Naive thymus-derived CD4-positive, alpha-beta T cell (primary cell): ENCODE measurements at regions of chr7 and their contacts with region 1.

Region 1: DNA sequence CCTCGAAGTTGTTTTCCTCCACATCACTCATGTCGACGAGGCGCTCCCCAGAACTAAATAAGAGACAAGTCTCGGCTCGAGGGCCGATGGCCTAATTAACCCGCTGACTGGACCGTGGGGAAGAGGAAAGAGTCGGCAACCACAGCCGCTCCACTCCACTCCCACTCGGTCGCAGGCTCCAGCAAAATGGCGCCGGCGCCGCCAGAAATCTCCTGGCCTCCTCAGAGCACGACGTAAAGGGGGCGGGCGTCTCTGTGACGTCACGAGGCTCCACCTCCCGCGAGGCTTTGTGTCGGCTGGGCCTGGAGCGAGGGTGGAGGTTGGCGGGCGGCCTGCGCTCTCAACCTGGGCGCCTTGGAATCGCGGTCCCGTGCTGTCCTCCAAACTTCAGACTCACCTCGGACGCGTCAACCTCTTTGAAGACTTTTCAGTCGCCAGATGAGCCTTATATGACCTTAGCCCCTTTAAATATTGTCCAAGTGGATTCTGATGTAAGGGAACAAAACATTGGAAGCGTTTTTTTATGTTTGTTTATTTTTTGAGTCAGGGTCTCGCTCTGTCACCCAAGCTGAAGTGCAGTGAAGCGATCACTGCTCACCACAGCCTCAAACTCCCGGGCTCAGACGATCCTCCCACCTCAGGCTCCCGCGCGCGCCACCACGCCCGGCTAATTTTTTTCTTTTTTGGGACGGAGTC is at the start of gene TRA2A:
- DNase-seq: peak; percentile 93 to 97 (median 95)
- ATAC-seq: peak; percentile 96
- H3K4me3 ChIP-seq: peak within 1 kb of the TSS; percentile 80
- H3K4me3 Mint-ChIP-seq: peak within 1 kb of the TSS; percentile 89 to 100 (median 99)
- H3K27ac ChIP-seq: peak within 1 kb of the TSS; percentile 93
- H3K27ac Mint-ChIP-seq: peak within 1 kb of the TSS; percentile 98 to 100 (median 100)
- H3K4me1 ChIP-seq: peaks cover 30 to 31% of the 10 kb centered on the region in 2 donors
- H3K4me1 Mint-ChIP-seq: peaks cover 28 to 51% (median 46%) of the 10 kb centered on the region in 7 donors
- H3K27me3 ChIP-seq: no peaks in the 10 kb centered on the region
- H3K27me3 Mint-ChIP-seq: no peaks in the 10 kb centered on the region
- total RNA-seq, gene TRA2A: 131 to 263 (median 163) TPM

Region 2: DNA sequence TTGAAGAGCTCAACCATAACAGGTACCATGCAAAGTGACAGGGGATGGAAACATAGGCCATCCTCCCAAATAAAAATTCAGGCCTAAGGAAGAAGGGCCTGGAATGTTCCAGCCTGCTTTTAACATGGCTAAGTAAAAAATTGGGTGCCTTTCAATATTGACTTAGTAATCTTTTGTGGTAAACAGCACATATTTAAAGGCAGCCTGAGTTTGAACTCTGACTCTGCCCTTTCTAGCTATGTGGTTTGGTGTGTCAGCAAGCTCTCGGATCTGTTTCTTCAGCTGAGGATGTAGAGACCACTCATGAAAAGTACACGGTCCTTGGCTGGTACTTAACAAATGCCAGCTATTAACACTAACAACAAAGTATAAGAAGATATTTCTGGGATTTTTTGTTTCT is 1394.5 kb before region 1 on chr7:
- CTCF ChIA-PET with region 1: no interaction called
- POLR2A ChIA-PET with region 1: no interaction called
- intact Hi-C with region 1: no loop called
- DNase-seq: no peak
- ATAC-seq: no peak
- H3K4me3 ChIP-seq: no peak overlapping the region
- H3K4me3 Mint-ChIP-seq: no peak overlapping the region
- H3K27ac ChIP-seq: no peak overlapping the region
- H3K27ac Mint-ChIP-seq: no peak overlapping the region
- H3K4me1 ChIP-seq: no peaks in the 10 kb centered on the region
- H3K4me1 Mint-ChIP-seq: no peaks in the 10 kb centered on the region
- H3K27me3 ChIP-seq: no peaks in the 10 kb centered on the region
- H3K27me3 Mint-ChIP-seq: peaks cover 7 to 32% (median 12%) of the 10 kb centered on the region in 5 donors

Region 3: DNA sequence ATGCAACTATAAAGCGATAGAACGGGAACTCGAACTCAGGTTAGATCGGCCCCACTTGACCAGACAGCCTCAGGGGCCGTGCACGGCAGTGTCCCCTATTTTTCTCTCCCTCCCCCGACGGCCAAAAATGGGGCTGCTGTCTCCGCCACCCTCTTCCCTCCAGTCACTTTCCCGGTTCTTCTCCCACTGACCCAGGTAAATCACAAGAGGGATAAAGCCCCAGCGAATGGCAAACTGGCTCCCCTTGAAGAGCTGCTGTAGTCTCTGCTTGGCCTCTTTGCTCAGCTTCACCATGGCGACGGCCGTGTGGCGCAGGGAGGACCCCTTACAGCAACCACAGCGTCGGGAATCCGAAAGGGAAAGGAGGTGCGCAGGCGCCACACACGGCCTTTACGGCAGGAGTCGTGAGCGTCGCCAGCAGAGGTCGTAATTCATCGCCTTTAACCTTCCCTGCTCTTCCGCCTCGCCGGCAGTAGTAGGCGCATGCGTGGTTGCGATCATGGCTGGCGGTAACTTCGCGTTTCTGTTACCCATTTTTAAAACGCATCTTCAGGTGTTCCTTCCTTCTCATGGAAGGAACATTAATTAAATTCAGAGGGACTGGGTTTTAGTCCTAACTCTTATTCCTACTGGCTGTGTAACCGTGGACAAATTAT is 709.3 kb before region 1 on chr7 and contains the start of gene TOMM7:
- CTCF ChIA-PET with region 1: no interaction called
- POLR2A ChIA-PET with region 1: no interaction called
- intact Hi-C with region 1: loop called in 1 of 2 experiments (anchors 10 kb)
- DNase-seq: peak; percentile 68 to 92 (median 90)
- ATAC-seq: peak; percentile 99
- H3K4me3 ChIP-seq: peak within 1 kb of the TSS; percentile 83
- H3K4me3 Mint-ChIP-seq: peak within 1 kb of the TSS; percentile 93 to 100 (median 99)
- H3K27ac ChIP-seq: peak within 1 kb of the TSS; percentile 94
- H3K27ac Mint-ChIP-seq: peak within 1 kb of the TSS; percentile 94 to 100 (median 99)
- H3K4me1 ChIP-seq: peaks cover 6 to 19% of the 10 kb centered on the region in 2 donors
- H3K4me1 Mint-ChIP-seq: peaks cover 15 to 53% (median 43%) of the 10 kb centered on the region in 7 donors
- H3K27me3 ChIP-seq: peaks cover 0 to 4% of the 10 kb centered on the region in 2 donors
- H3K27me3 Mint-ChIP-seq: peaks cover 15 to 36% (median 19%) of the 10 kb centered on the region in 5 donors
- total RNA-seq, gene TOMM7: 302 to 737 (median 649) TPM

Region 4: GRCh38 chr7:23273141-23273599 is 258.8 kb before region 1 on chr7:
- CTCF ChIA-PET with region 1: no interaction called
- POLR2A ChIA-PET with region 1: interaction called, 5 read pairs
- intact Hi-C with region 1: loop called (anchors 5 kb)
- DNase-seq: peak; percentile 64 to 85 (median 80)
- ATAC-seq: peak; percentile 99
- H3K4me3 ChIP-seq: no peak overlapping the region
- H3K4me3 Mint-ChIP-seq: peak overlapping the region; percentile 14 to 82 (median 70)
- H3K27ac ChIP-seq: no peak overlapping the region
- H3K27ac Mint-ChIP-seq: peak overlapping the region in 4 of 9 donors; percentile 3 to 54 (median 23)
- H3K4me1 ChIP-seq: peaks cover 0 to 4% of the 10 kb centered on the region in 2 donors
- H3K4me1 Mint-ChIP-seq: peaks cover 2 to 16% (median 10%) of the 10 kb centered on the region in 7 donors
- H3K27me3 ChIP-seq: no peaks in the 10 kb centered on the region
- H3K27me3 Mint-ChIP-seq: peaks cover 0 to 9% (median 4%) of the 10 kb centered on the region in 5 donors

Region 5: DNA sequence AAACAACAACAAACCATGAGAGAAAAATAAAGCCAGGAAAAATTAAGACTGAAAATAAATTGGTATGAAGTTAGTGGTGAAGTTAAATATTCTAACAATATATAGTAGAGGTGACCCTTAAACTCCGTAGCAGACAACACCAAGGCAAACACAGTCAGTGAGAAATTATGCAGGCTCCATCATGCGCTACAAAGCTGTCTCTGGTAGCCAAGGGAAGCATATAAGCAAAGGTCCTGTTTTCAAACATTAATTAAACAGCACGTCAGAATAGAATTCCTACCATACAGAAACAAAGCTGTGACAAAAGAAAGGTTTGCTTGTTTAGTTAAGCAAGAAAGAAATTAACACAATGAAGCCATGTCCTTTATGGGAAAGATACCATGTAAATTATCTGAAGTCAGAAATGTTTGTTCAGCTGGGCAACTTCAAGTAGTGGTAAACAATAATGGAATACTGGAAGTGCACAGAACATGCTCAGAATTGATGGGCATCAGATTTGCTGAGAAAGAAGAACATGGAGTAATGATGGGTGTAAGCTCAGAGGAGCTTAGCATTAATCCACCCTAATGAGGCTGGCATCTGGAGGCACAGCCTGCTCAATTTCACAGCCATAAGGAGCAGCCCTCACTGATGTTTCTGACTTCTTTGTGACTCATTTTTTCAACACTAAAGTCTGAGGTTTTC is 137.3 kb before region 1 on chr7:
- CTCF ChIA-PET with region 1: no interaction called
- POLR2A ChIA-PET with region 1: no interaction called
- intact Hi-C with region 1: no loop called
- DNase-seq: no peak
- ATAC-seq: no peak
- H3K4me3 ChIP-seq: no peak overlapping the region
- H3K4me3 Mint-ChIP-seq: no peak overlapping the region
- H3K27ac ChIP-seq: no peak overlapping the region
- H3K27ac Mint-ChIP-seq: no peak overlapping the region
- H3K4me1 ChIP-seq: no peaks in the 10 kb centered on the region
- H3K4me1 Mint-ChIP-seq: no peaks in the 10 kb centered on the region
- H3K27me3 ChIP-seq: no peaks in the 10 kb centered on the region
- H3K27me3 Mint-ChIP-seq: peaks cover 0 to 4% (median 0%) of the 10 kb centered on the region in 5 donors

Region 6: DNA sequence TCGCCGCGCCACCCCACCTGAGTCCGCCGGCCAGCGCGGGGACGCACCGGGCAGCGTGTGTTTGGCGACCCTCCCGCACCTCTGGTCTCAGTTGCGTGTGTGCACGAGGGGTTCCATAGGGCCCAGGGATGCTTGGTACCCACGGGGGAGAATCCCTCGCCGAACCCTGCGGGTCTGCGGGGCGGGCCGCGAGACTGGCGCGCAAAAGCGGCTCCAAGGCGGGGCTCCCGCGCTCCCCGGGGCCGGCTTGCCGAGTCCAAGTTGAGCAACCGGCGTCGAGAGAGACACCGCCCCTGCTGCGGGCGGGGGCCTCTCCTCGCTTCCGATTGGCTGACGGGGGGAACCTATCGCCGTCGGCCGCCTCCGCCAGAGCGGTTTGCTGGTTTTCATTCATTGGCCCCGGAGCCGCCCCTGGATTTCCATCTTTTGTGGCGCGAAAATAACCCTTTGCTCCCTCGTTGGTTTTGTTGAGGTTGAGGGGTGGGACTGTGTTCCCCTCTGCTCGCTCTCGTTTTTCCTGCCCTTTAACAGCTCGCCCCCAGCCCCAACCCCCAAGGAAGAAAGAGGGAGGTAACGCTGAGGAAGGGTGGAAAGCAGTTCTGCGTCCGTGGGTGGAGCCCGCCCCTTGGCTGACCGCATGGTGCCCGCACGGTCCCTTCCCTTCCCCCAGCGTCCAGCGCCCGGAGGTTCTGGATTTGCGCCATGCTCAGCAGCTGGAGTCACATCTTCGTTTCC is 57.7 kb before region 1 on chr7:
- CTCF ChIA-PET with region 1: no interaction called
- POLR2A ChIA-PET with region 1: interaction called, 3 read pairs
- intact Hi-C with region 1: loop called (anchors 2 kb)
- DNase-seq: peak in 6 of 9 donors; percentile 13 to 90 (median 26)
- ATAC-seq: peak; percentile 80
- H3K4me3 ChIP-seq: no peak overlapping the region
- H3K4me3 Mint-ChIP-seq: peak overlapping the region; percentile 13 to 85 (median 54)
- H3K27ac ChIP-seq: no peak overlapping the region
- H3K27ac Mint-ChIP-seq: peak overlapping the region in 5 of 9 donors; percentile 21 to 70 (median 69)
- H3K4me1 ChIP-seq: peaks cover 12 to 22% of the 10 kb centered on the region in 2 donors
- H3K4me1 Mint-ChIP-seq: peaks cover 17 to 35% (median 29%) of the 10 kb centered on the region in 7 donors
- H3K27me3 ChIP-seq: peaks cover 78 to 85% of the 10 kb centered on the region in 2 donors
- H3K27me3 Mint-ChIP-seq: peaks cover 67 to 75% (median 70%) of the 10 kb centered on the region in 5 donors

Region 7: DNA sequence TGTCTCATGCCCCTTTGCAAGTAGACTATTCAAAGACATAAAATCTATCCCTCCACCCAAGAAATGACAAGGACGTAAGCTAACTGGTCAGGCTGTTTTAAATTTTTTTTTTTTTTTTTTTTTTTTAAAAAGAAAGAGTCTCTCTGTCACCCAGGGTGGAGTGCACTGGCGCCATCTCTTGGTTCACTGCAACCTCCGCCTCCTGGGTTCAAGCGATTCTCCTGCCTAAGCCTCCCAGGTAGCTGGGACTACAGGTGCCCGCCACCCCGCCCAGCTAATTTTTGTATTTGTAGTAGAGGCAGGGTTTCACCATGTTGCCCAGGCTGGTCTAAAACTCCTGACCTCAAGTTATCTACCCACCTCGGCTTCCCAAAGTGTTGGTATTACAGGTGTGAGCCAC is 11.4 kb before region 1 on chr7:
- CTCF ChIA-PET with region 1: interaction called, 4 read pairs
- POLR2A ChIA-PET with region 1: interaction called, 4 read pairs
- intact Hi-C with region 1: loop called (anchors 1 to 2 kb)
- DNase-seq: no peak
- ATAC-seq: no peak
- H3K4me3 ChIP-seq: no peak overlapping the region
- H3K4me3 Mint-ChIP-seq: no peak overlapping the region
- H3K27ac ChIP-seq: no peak overlapping the region
- H3K27ac Mint-ChIP-seq: peak overlapping the region in 1 of 9 donors; percentile 8
- H3K4me1 ChIP-seq: peaks cover 7 to 27% of the 10 kb centered on the region in 2 donors
- H3K4me1 Mint-ChIP-seq: peaks cover 30 to 50% (median 41%) of the 10 kb centered on the region in 7 donors
- H3K27me3 ChIP-seq: no peaks in the 10 kb centered on the region
- H3K27me3 Mint-ChIP-seq: no peaks in the 10 kb centered on the region

Region 8: DNA sequence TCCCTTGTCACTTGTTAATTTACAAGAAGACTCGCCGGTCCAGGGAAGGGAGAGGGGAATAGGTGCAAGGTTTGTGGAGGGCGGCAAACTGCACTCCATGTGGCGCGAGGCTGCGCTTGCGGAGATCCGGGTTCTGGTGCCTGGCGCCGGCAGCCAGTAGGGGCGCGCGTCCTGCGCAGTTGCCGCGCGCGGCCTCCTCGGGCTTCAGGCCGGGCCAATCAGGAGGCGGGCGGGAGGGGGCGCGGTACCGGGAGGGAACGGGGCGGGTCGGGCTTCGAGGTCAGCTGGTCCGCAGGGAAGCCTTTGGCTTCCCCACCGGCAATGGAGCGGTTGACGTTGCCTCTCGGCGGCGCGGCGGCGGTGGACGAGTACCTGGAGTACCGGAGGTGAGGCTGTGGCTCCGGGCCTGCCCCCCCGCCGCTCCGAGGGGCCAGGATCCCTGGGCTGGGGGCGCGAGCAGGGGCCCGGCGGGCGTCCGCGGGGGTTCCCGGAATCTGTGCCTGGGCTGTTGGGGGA is 148.0 kb after region 1 on chr7 and contains the start of gene FAM221A:
- CTCF ChIA-PET with region 1: no interaction called
- POLR2A ChIA-PET with region 1: no interaction called
- intact Hi-C with region 1: loop called in 1 of 2 experiments (anchors 2 kb)
- DNase-seq: peak; percentile 52 to 80 (median 72)
- ATAC-seq: peak; percentile 99
- H3K4me3 ChIP-seq: peak within 1 kb of the TSS; percentile 95
- H3K4me3 Mint-ChIP-seq: peak within 1 kb of the TSS; percentile 89 to 98 (median 94)
- H3K27ac ChIP-seq: peak within 1 kb of the TSS; percentile 65
- H3K27ac Mint-ChIP-seq: peak within 1 kb of the TSS; percentile 45 to 90 (median 86)
- H3K4me1 ChIP-seq: no peaks in the 10 kb centered on the region
- H3K4me1 Mint-ChIP-seq: peaks cover 0 to 32% (median 13%) of the 10 kb centered on the region in 7 donors
- H3K27me3 ChIP-seq: no peaks in the 10 kb centered on the region
- H3K27me3 Mint-ChIP-seq: peaks cover 0 to 21% (median 3%) of the 10 kb centered on the region in 5 donors
- total RNA-seq, gene FAM221A: 4.0 to 8.1 (median 5.3) TPM

Region 9: GRCh38 chr7:25179771-25180591 is 1648.0 kb after region 1 on chr7:
- CTCF ChIA-PET with region 1: no interaction called
- POLR2A ChIA-PET with region 1: no interaction called
- intact Hi-C with region 1: loop called in 1 of 2 experiments (anchors 10 kb)
- DNase-seq: peak; percentile 88 to 99 (median 94)
- ATAC-seq: peak; percentile 99
- H3K4me3 ChIP-seq: peak overlapping the region; percentile 75
- H3K4me3 Mint-ChIP-seq: peak overlapping the region; percentile 82 to 93 (median 88)
- H3K27ac ChIP-seq: peak overlapping the region; percentile 86
- H3K27ac Mint-ChIP-seq: peak overlapping the region; percentile 83 to 96 (median 92)
- H3K4me1 ChIP-seq: peaks cover 6 to 7% of the 10 kb centered on the region in 2 donors
- H3K4me1 Mint-ChIP-seq: peaks cover 13 to 31% (median 22%) of the 10 kb centered on the region in 7 donors
- H3K27me3 ChIP-seq: no peaks in the 10 kb centered on the region
- H3K27me3 Mint-ChIP-seq: peaks cover 0 to 12% (median 0%) of the 10 kb centered on the region in 5 donors